ENCODE measurements at regions of chr22 and their contacts with region 1.

Region 1: GRCh38 chr22:22884010-22884887 is 3.4 kb upstream of the IGLL5 start:
- DNase-seq: peak; percentile 57 to 100 (median 78)
- ATAC-seq: peak; percentile 94
- H3K4me3 ChIP-seq: no peak overlapping the region
- H3K27ac ChIP-seq: no peak overlapping the region
- H3K4me1 ChIP-seq: peaks cover 0 to 9% of the 10 kb centered on the region in 2 experiments; a peak in 1 of 5 replicates
- H3K27me3 ChIP-seq: peaks cover 0 to 46% of the 10 kb centered on the region in 2 experiments; a peak in 2 of 5 replicates
- CTCF ChIP-seq: no peak
- EP300 ChIP-seq: no peak
- POLR2A ChIP-seq: no peak
- RAD21 ChIP-seq: no peak

Region 2: DNA sequence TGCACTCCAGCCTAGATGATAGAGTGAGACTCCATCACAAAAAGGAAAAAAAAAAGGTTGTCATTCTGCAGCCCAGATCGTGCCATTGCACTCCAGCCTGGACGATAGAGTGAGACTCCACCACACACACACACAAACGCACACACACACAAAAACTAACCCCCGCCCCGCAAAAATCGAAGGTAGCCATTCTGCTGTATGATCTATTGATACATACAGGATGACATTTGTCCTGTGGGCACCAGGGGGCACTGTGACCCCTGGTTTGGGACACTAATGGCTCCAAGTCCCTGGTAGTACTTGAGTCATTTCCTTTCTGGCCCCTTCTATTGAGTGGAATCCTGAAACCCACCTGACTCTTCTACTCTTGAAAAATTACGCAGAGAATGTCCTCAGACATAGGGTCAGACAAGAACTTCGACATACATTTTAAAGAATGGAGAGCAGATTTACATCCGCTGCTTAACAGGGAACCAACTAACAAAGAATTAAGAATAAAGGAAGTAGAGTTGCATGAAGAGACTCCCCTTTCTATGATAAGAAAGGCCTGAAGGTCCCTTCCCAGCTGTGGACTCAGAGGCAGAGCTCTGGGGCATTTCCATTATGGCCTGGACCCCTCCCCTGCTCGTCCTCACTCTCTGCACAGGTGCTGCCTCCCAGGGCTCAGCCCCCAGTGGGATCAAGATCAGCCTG is 290.1 kb before region 1 on chr22:
- CTCF ChIA-PET with region 1: interaction called, 12 read pairs
- POLR2A ChIA-PET with region 1: no interaction called
- in situ Hi-C with region 1: no loop called
- intact Hi-C with region 1: loop called (anchors 5 kb)
- DNase-seq: peak; percentile 94 to 100 (median 98)
- ATAC-seq: peak; percentile 95
- H3K4me3 ChIP-seq: no peak overlapping the region
- H3K27ac ChIP-seq: no peak overlapping the region
- H3K4me1 ChIP-seq: no peaks in the 10 kb centered on the region
- H3K27me3 ChIP-seq: peaks cover 31 to 47% of the 10 kb centered on the region in 2 experiments; a peak in 4 of 5 replicates
- CTCF ChIP-seq: no peak
- EP300 ChIP-seq: no peak
- POLR2A ChIP-seq: no peak
- RAD21 ChIP-seq: no peak

Region 3: GRCh38 chr22:22720201-22720723 is 164.0 kb before region 1 on chr22:
- CTCF ChIA-PET with region 1: interaction called, 11 read pairs
- POLR2A ChIA-PET with region 1: no interaction called
- in situ Hi-C with region 1: no loop called
- intact Hi-C with region 1: loop called (anchors 5 kb)
- DNase-seq: peak; percentile 93 to 96 (median 94)
- ATAC-seq: peak; percentile 97
- H3K4me3 ChIP-seq: no peak overlapping the region
- H3K27ac ChIP-seq: no peak overlapping the region
- H3K4me1 ChIP-seq: peaks cover 0 to 25% of the 10 kb centered on the region in 2 experiments; a peak in 3 of 5 replicates
- H3K27me3 ChIP-seq: peaks cover 0 to 12% of the 10 kb centered on the region in 2 experiments; a peak in 2 of 5 replicates
- CTCF ChIP-seq: no peak
- EP300 ChIP-seq: no peak
- POLR2A ChIP-seq: no peak
- RAD21 ChIP-seq: no peak

Region 4: DNA sequence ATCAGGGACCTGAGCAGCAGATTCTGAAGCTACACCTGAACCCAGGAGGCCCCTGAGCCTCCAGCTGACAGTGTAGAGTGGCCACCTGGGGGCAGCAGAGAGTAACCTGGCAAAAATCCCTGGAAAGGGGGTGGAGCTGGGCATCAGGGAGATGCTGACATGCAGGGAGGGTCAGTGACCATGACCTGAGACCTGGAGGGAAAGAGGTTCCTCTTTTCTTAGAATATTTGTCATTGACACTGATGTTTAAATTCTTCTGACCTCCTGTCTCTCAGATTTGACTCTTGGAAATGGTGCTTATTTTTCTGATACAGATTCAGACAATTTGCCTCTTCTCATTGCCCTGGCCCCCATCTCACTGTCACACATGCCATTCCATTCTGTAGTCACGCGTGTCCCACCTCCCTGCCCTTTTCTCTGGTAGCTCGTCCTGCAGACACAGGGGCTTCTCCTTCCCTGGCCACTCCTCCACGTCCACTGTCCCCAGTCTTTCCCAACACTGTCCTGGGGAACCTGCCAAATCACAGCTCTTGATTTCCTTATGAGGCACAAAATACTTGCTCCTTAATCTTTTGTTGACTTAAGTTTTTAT is 113.9 kb before region 1 on chr22:
- CTCF ChIA-PET with region 1: interaction called, 17 read pairs
- POLR2A ChIA-PET with region 1: interaction called, 7 read pairs
- in situ Hi-C with region 1: no loop called
- intact Hi-C with region 1: loop called (anchors 1 kb)
- DNase-seq: peak; percentile 96 to 100 (median 98)
- ATAC-seq: peak; percentile 94
- H3K4me3 ChIP-seq: no peak overlapping the region
- H3K27ac ChIP-seq: no peak overlapping the region
- H3K4me1 ChIP-seq: no peaks in the 10 kb centered on the region
- H3K27me3 ChIP-seq: peaks cover 0 to 32% of the 10 kb centered on the region in 2 experiments; a peak in 2 of 5 replicates
- CTCF ChIP-seq: peak in 1 of 3 experiments; percentile 100; a peak in 2 of 6 replicates
- EP300 ChIP-seq: peak; percentile 71
- POLR2A ChIP-seq: no peak
- RAD21 ChIP-seq: no peak

Region 5: DNA sequence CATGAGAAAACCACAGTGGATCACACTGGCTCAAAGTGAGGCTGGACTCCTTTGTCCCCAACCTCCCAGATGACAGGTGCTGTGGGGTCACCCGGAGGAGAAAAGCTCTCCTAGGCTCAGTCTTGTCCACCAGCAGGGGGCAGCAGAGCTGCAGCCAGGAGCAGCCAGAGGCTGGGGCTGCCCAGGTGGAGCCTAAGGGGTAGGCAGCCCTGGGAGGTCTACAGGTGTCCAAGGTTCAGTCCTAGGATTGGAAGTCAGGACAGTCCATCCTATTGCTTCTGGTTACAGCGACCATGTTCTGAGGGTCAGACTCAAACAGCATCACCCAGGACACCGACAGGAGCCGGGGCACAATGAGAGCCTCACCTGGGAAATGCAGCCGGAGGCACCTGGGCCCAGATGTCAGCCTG is 74.2 kb before region 1 on chr22:
- CTCF ChIA-PET with region 1: interaction called, 251 read pairs
- POLR2A ChIA-PET with region 1: interaction called, 21 read pairs
- in situ Hi-C with region 1: loop called (anchors 5 kb)
- intact Hi-C with region 1: loop called (anchors 1 kb)
- DNase-seq: peak; percentile 97 to 100 (median 98)
- ATAC-seq: peak; percentile 96
- H3K4me3 ChIP-seq: no peak overlapping the region
- H3K27ac ChIP-seq: no peak overlapping the region
- H3K4me1 ChIP-seq: peaks cover 0 to 4% of the 10 kb centered on the region in 2 experiments; a peak in 1 of 5 replicates
- H3K27me3 ChIP-seq: peaks cover 8 to 19% of the 10 kb centered on the region in 2 experiments; a peak in 3 of 5 replicates
- CTCF ChIP-seq: no peak
- EP300 ChIP-seq: no peak
- POLR2A ChIP-seq: no peak
- RAD21 ChIP-seq: no peak

Region 6: DNA sequence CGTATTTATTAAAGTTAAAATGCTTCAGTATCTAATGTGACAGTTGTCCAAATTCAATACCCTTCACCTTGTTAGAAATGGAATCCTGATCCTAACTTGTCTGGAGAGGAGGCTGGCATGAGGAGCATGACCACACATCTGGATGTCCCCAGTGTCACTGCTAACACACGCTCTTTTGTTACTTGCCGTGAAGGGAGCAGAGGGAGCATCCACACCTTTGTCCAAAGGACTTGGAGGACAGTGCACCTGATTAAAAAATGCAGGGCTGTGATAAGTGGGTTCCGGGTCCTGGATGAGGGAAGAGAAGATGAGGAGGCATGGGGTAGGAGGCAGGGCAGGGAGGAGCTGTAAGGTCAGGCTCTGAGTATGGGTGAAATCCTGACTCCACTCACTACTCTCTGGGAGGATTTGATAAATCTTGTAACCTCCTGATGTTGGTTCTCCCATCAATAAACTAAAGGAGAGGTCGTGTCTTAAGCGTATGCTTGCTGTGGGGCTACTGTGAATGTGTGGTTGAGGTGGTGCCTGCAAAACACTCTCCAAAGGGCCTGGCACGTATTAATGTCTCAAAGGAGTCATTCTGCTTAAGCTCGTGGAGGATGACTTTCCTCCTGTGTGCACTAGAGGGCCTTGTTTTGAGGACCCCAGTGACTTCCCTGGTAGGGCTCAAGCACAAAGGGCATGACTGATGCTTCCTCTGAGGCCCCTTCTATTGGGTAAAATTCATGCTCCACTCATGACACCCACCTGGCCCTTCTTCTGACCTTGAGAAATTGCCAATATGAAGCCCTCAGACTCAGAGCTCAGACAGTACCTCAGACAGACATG is 13.5 kb before region 1 on chr22:
- CTCF ChIA-PET with region 1: interaction called, 7 read pairs
- POLR2A ChIA-PET with region 1: interaction called, 35 read pairs
- in situ Hi-C with region 1: no loop called
- intact Hi-C with region 1: no loop called
- DNase-seq: peak; percentile 53 to 84 (median 70)
- ATAC-seq: peak; percentile 82
- H3K4me3 ChIP-seq: no peak overlapping the region
- H3K27ac ChIP-seq: no peak overlapping the region
- H3K4me1 ChIP-seq: no peaks in the 10 kb centered on the region
- H3K27me3 ChIP-seq: peaks cover 0 to 45% of the 10 kb centered on the region in 2 experiments; a peak in 3 of 5 replicates
- CTCF ChIP-seq: no peak
- EP300 ChIP-seq: no peak
- POLR2A ChIP-seq: no peak
- RAD21 ChIP-seq: no peak

Region 7: DNA sequence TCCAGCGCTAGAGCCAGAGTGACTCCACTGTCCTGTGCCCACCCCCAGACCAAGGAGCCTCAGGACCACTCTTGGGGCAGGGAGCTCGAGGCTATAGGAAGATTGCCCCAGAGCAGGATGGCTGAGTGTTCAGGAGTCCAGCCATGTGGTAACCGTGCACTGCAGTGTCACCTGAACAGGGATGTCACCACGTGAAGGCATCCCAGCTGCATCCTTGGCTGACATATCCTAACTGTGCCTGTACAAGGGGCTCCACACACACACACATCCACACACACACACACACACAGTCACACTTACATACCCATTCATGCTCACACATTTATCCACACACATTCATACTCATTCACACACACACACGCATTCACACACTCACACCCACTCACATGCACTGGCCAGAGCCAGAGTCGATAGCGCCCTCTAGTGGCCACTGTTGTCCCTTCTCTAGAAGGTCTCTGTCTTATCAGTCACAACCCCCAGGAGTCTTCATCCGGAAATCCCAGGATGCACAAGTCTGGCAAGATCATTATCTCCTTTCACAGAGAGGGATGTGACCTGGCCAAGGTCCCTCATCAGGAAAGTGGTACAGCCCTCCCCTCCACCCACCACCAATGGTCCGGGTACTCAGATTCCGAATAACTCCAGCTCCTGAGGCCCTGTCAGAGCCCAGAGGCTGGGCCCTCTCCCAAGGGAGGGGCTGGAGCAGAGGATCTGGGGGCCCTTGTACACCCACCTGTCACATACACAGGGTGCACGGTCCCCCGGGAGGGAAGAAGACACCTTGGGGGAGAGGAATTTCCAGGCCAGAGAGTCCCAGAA is 58.5 kb after region 1 on chr22:
- CTCF ChIA-PET with region 1: interaction called, 4 read pairs
- POLR2A ChIA-PET with region 1: interaction called, 6 read pairs
- in situ Hi-C with region 1: no loop called
- intact Hi-C with region 1: loop called (anchors 2 kb)
- DNase-seq: peak; percentile 99 to 100 (median 100)
- ATAC-seq: peak; percentile 94
- H3K4me3 ChIP-seq: no peak overlapping the region
- H3K27ac ChIP-seq: no peak overlapping the region
- H3K4me1 ChIP-seq: peaks cover 0 to 3% of the 10 kb centered on the region in 2 experiments; a peak in 1 of 5 replicates
- H3K27me3 ChIP-seq: peaks cover 19 to 38% of the 10 kb centered on the region in 2 experiments; a peak in 4 of 5 replicates
- CTCF ChIP-seq: no peak
- EP300 ChIP-seq: no peak
- POLR2A ChIP-seq: no peak
- RAD21 ChIP-seq: no peak